ENCODE measurements at regions of chr15 and their contacts with region 1.

Region 1: DNA sequence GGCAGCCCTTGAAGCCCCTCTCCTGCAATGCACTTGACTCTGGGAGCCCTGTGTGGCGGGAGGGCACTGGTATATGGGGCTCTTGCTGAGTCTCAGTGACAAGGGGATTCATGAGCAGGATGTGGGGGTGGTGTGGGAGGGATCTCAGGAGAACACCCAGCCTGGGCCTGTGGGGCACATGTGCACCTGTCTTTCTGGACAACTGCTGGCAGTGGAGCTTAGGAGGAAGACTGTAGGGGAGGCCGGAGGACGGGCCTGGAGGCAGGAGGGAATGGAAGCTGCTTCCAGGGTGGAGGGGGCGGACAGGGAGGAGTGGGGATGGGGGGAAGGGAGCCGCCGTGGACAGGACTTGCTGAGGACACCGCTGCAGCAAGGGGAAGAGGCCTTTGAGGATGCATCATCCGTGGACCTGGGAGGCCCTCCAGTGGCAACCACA is 10.8 kb upstream of the SNRPA1 start:
- DNase-seq: no peak
- ATAC-seq: no peak
- H3K4me3 ChIP-seq: no peak overlapping the region
- H3K27ac ChIP-seq: no peak overlapping the region
- H3K4me1 ChIP-seq: no peaks in the 10 kb centered on the region
- H3K27me3 ChIP-seq: peaks cover 0 to 1% of the 10 kb centered on the region in 2 experiments; a peak in 2 of 4 replicates
- CTCF ChIP-seq: no peak
- EP300 ChIP-seq: no peak
- POLR2A ChIP-seq: no peak
- RAD21 ChIP-seq: no peak

Region 2: GRCh38 chr15:101288908-101289513 is 16.8 kb before region 1 on chr15:
- CTCF ChIA-PET with region 1: interaction called, 20 read pairs
- POLR2A ChIA-PET with region 1: no interaction called
- RAD21 ChIA-PET with region 1: no interaction called
- SMC1A ChIA-PET with region 1: interaction called, 6 read pairs
- in situ Hi-C with region 1: no loop called
- intact Hi-C with region 1: no loop called
- DNase-seq: no peak
- ATAC-seq: peak; percentile 48
- H3K4me3 ChIP-seq: no peak overlapping the region
- H3K27ac ChIP-seq: no peak overlapping the region
- H3K4me1 ChIP-seq: peaks cover 4% of the 10 kb centered on the region
- H3K27me3 ChIP-seq: no peaks in the 10 kb centered on the region
- CTCF ChIP-seq: peak; percentile 52 to 58 (median 53)
- EP300 ChIP-seq: no peak
- POLR2A ChIP-seq: no peak
- RAD21 ChIP-seq: peak; percentile 45

Region 3: GRCh38 chr15:101501703-101502373 is 196.0 kb after region 1 on chr15:
- CTCF ChIA-PET with region 1: interaction called, 5 read pairs
- POLR2A ChIA-PET with region 1: no interaction called
- RAD21 ChIA-PET with region 1: no interaction called
- SMC1A ChIA-PET with region 1: interaction called, 3 read pairs
- in situ Hi-C with region 1: loop called (anchors 5 kb)
- intact Hi-C with region 1: loop called (anchors 5 kb)
- DNase-seq: no peak
- ATAC-seq: peak; percentile 88
- H3K4me3 ChIP-seq: no peak overlapping the region
- H3K27ac ChIP-seq: no peak overlapping the region
- H3K4me1 ChIP-seq: peaks cover 8% of the 10 kb centered on the region
- H3K27me3 ChIP-seq: no peaks in the 10 kb centered on the region; a peak in 2 of 4 replicates
- CTCF ChIP-seq: peak; percentile 40 to 51 (median 50)
- EP300 ChIP-seq: no peak
- POLR2A ChIP-seq: no peak
- RAD21 ChIP-seq: peak; percentile 40; the same call in 1 of the 2 replicates

Measured in GM12878 (cell line).